ENCODE measurements at regions of chr1 and their contacts with region 1.

Region 1: GRCh38 chr1:112390775-112391602 is 5.0 kb upstream of the CTTNBP2NL start:
- DNase-seq: peak; percentile 94 to 96
- H3K4me3 ChIP-seq: peak overlapping the region; percentile 47 to 57
- H3K27ac ChIP-seq: peak overlapping the region; percentile 83 to 93
- H3K4me1 ChIP-seq: peaks cover 0 to 57% (median 31%) of the 10 kb centered on the region in 4 donors
- H3K27me3 ChIP-seq: peaks cover 0 to 3% of the 10 kb centered on the region in 2 donors
- CTCF ChIP-seq: peak; percentile 92

Region 2: GRCh38 chr1:112325504-112325903 is 65.5 kb before region 1 on chr1:
- intact Hi-C with region 1: no loop called
- DNase-seq: no peak
- H3K4me3 ChIP-seq: no peak overlapping the region
- H3K27ac ChIP-seq: no peak overlapping the region
- H3K4me1 ChIP-seq: peaks cover 0 to 5% (median 0%) of the 10 kb centered on the region in 4 donors
- H3K27me3 ChIP-seq: peaks cover 0 to 7% of the 10 kb centered on the region in 2 donors
- CTCF ChIP-seq: no peak

Region 3: GRCh38 chr1:112344754-112345423 is 46.1 kb before region 1 on chr1:
- intact Hi-C with region 1: no loop called
- DNase-seq: no peak
- H3K4me3 ChIP-seq: no peak overlapping the region
- H3K27ac ChIP-seq: no peak overlapping the region
- H3K4me1 ChIP-seq: no peaks in the 10 kb centered on the region
- H3K27me3 ChIP-seq: peaks cover 0 to under 1% of the 10 kb centered on the region in 2 donors
- CTCF ChIP-seq: no peak

Region 4: GRCh38 chr1:112466078-112466660 is 75.2 kb after region 1 on chr1:
- intact Hi-C with region 1: loop called (anchors 2 kb)
- DNase-seq: peak; percentile 96 to 97
- H3K4me3 ChIP-seq: peak overlapping the region; percentile 44 to 52
- H3K27ac ChIP-seq: peak overlapping the region; percentile 68
- H3K4me1 ChIP-seq: peaks cover 0 to 25% (median 12%) of the 10 kb centered on the region in 4 donors
- H3K27me3 ChIP-seq: no peaks in the 10 kb centered on the region
- CTCF ChIP-seq: peak; percentile 79 to 95

Region 5: DNA sequence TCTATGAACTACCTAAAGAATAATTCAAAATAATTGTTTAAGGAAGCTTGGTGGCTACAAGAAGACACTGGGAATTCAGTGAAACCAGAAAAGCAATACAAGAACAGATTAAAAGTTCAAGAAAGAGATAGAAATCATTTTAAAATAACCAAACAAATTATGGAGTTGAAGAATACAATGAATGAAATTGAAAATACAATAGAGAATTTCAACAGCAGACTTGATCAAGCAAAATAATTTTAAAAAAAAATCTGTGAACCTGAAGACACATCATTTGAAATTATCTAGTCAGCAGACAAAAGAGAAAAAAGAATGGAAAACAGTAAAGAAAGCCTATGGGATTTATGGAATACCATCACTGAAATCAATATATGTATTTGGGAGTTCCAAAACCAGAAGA is 86.6 kb after region 1 on chr1:
- intact Hi-C with region 1: no loop called
- DNase-seq: no peak
- H3K4me3 ChIP-seq: no peak overlapping the region
- H3K27ac ChIP-seq: no peak overlapping the region
- H3K4me1 ChIP-seq: no peaks in the 10 kb centered on the region
- H3K27me3 ChIP-seq: no peaks in the 10 kb centered on the region
- CTCF ChIP-seq: no peak

Region 6: GRCh38 chr1:112706908-112707663 is 316.1 kb after region 1 on chr1 and contains the start of gene RHOC:
- intact Hi-C with region 1: loop called (anchors 5 kb)
- DNase-seq: peak; percentile 91 to 95
- H3K4me3 ChIP-seq: peak within 1 kb of the TSS; percentile 78 to 96
- H3K27ac ChIP-seq: peak within 1 kb of the TSS; percentile 96 to 99
- H3K4me1 ChIP-seq: peaks cover 0 to 47% (median 38%) of the 10 kb centered on the region in 4 donors
- H3K27me3 ChIP-seq: no peaks in the 10 kb centered on the region
- CTCF ChIP-seq: peak; percentile 92 to 97